ENCODE measurements at regions of chr1 and their contacts with region 1.

Region 1: DNA sequence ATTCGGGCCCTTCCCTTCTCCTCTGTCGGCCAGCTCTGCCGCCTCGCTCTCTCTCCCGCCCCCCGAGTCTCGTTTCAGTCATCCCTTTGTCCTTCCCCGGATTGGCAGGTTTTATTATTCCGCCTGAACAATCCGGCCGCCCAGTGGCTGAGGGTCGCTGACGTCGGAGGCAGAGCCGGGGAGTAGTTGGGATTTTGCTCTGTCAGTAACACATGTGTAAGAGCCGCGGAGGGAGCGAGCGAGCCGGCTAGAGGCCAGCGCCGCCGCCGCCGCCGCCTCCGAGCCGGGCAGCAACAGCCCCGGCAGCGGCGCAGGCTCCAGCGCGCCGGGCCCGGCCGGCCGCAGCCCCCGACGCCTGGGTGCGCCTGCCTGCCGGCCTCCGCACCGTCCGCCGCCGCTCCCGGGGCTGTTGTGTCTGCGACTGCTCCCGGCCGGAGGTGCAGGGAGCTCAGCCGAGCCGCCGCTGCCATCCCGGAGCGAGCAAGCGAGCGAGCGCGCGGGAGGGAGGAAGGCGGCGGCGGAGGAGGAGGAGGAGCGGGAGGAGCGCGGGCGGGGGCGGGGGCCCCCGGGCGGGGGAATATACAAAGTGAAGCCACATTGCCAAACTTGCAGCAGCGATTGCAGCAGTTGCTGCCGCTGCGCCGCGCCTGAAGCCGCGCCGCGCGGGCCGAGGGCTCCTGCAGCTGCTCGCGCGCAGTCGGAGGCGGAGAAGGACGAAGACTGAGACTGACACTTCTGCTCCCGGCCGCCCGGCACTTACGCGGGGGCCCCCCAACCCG is at the start of gene LMO4:
- DNase-seq: peak; percentile 57 to 80 (median 70)
- ATAC-seq: peak; percentile 83
- H3K4me3 ChIP-seq: peak within 1 kb of the TSS; percentile 44
- H3K4me3 Mint-ChIP-seq: peak within 1 kb of the TSS; percentile 85 to 97 (median 94)
- H3K27ac ChIP-seq: peak within 1 kb of the TSS; percentile 69
- H3K27ac Mint-ChIP-seq: peak within 1 kb of the TSS; percentile 70 to 98 (median 91)
- H3K4me1 ChIP-seq: peaks cover 19 to 21% of the 10 kb centered on the region in 2 donors
- H3K4me1 Mint-ChIP-seq: peaks cover 23 to 59% (median 42%) of the 10 kb centered on the region in 7 donors
- H3K27me3 ChIP-seq: peaks cover 0 to 6% of the 10 kb centered on the region in 2 donors
- H3K27me3 Mint-ChIP-seq: peaks cover 4 to 33% (median 16%) of the 10 kb centered on the region in 5 donors
- total RNA-seq, gene LMO4: 6.4 to 30.6 (median 9.4) TPM

Region 2: GRCh38 chr1:86499987-86500593 is 828.4 kb before region 1 on chr1:
- CTCF ChIA-PET with region 1: no interaction called
- POLR2A ChIA-PET with region 1: no interaction called
- intact Hi-C with region 1: loop called in 1 of 2 experiments (anchors 5 kb)
- DNase-seq: peak in 6 of 9 donors; percentile 55 to 76 (median 73)
- ATAC-seq: peak; percentile 92
- H3K4me3 ChIP-seq: no peak overlapping the region
- H3K4me3 Mint-ChIP-seq: no peak overlapping the region
- H3K27ac ChIP-seq: no peak overlapping the region
- H3K27ac Mint-ChIP-seq: no peak overlapping the region
- H3K4me1 ChIP-seq: peaks cover 0 to 8% of the 10 kb centered on the region in 2 donors
- H3K4me1 Mint-ChIP-seq: peaks cover 0 to 18% (median 10%) of the 10 kb centered on the region in 7 donors
- H3K27me3 ChIP-seq: no peaks in the 10 kb centered on the region
- H3K27me3 Mint-ChIP-seq: peaks cover 6 to 46% (median 14%) of the 10 kb centered on the region in 5 donors

Region 3: GRCh38 chr1:87045761-87046304 is 282.6 kb before region 1 on chr1:
- CTCF ChIA-PET with region 1: no interaction called
- POLR2A ChIA-PET with region 1: no interaction called
- intact Hi-C with region 1: loop called (anchors 5 kb)
- DNase-seq: peak; percentile 7 to 91 (median 85)
- ATAC-seq: peak; percentile 82
- H3K4me3 ChIP-seq: no peak overlapping the region
- H3K4me3 Mint-ChIP-seq: peak overlapping the region; percentile 31 to 87 (median 64)
- H3K27ac ChIP-seq: peak overlapping the region; percentile 58
- H3K27ac Mint-ChIP-seq: peak overlapping the region; percentile 52 to 100 (median 94)
- H3K4me1 ChIP-seq: peaks cover 10 to 21% of the 10 kb centered on the region in 2 donors
- H3K4me1 Mint-ChIP-seq: peaks cover 24 to 72% (median 60%) of the 10 kb centered on the region in 7 donors
- H3K27me3 ChIP-seq: no peaks in the 10 kb centered on the region
- H3K27me3 Mint-ChIP-seq: no peaks in the 10 kb centered on the region

Region 4: DNA sequence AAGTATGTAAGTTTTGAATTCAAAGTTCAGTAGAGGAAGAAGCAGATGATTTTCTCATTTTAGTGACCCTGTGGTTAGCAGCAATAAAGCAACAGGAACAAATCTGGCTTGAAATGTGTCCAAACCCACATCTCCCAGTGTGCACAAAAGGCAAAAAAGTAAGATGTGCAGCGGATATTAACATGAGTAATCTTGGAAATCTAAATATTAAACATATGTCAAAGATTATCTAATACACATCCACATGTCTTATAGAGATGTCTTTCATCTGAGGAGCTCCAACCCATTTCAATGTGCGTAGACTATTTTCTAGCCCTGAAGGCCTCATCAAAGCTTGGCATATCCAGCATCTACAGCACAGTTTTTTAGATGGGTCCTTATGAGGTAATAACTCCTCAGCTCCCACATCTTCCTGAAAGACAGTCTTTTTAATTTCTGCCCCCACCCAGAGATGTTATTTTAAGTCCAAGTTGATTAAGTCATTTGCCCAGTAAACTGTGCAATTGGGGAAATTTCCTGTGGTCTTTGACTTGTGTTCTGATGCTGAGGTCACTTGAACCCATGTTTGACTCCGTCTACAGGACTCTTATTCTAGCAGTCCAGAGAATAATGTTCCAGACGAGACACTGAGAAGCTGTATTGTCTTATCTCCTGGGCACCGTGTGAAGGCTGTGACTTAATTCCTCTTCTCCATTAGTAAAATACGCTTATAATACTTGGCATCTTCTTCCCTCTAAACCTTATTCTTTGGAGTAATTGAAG is 74.0 kb after region 1 on chr1:
- CTCF ChIA-PET with region 1: no interaction called
- POLR2A ChIA-PET with region 1: interaction called, 3 read pairs
- intact Hi-C with region 1: loop called (anchors 1 to 5 kb)
- DNase-seq: no peak
- ATAC-seq: no peak
- H3K4me3 ChIP-seq: no peak overlapping the region
- H3K4me3 Mint-ChIP-seq: no peak overlapping the region
- H3K27ac ChIP-seq: no peak overlapping the region
- H3K27ac Mint-ChIP-seq: no peak overlapping the region
- H3K4me1 ChIP-seq: no peaks in the 10 kb centered on the region
- H3K4me1 Mint-ChIP-seq: peaks cover 4 to 26% (median 12%) of the 10 kb centered on the region in 7 donors
- H3K27me3 ChIP-seq: no peaks in the 10 kb centered on the region
- H3K27me3 Mint-ChIP-seq: peaks cover 0 to 46% (median 0%) of the 10 kb centered on the region in 5 donors

Region 5: DNA sequence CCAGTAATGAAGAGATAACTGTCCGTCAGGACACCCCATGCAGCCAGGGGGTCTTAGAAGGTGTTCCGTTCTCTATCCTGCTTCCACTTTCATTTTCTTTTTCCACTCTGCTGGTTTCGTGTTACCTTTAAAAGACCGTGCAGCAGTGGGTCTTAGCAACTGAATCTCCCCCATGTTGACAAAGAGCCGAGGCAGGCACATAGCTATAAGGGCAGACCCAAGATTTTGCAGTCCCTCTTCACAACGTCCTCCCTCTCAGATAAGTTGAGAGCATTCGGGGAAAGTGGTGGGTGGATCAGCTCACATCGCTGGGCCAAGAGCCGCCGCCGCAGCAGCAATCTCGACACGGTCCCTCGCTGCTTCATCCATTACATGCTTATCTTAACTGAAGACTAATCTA is 355.7 kb after region 1 on chr1:
- CTCF ChIA-PET with region 1: no interaction called
- POLR2A ChIA-PET with region 1: no interaction called
- intact Hi-C with region 1: loop called in 1 of 2 experiments (anchors 2 kb)
- DNase-seq: peak in 2 of 9 donors; percentile 5 to 7
- ATAC-seq: no peak
- H3K4me3 ChIP-seq: peak overlapping the region; percentile 6
- H3K4me3 Mint-ChIP-seq: peak overlapping the region in 9 of 10 donors; percentile 65 to 85 (median 74)
- H3K27ac ChIP-seq: no peak overlapping the region
- H3K27ac Mint-ChIP-seq: peak overlapping the region in 7 of 9 donors; percentile 3 to 91 (median 46)
- H3K4me1 ChIP-seq: no peaks in the 10 kb centered on the region
- H3K4me1 Mint-ChIP-seq: no peaks in the 10 kb centered on the region
- H3K27me3 ChIP-seq: no peaks in the 10 kb centered on the region
- H3K27me3 Mint-ChIP-seq: peaks cover 0 to 19% (median 0%) of the 10 kb centered on the region in 5 donors

Region 6: DNA sequence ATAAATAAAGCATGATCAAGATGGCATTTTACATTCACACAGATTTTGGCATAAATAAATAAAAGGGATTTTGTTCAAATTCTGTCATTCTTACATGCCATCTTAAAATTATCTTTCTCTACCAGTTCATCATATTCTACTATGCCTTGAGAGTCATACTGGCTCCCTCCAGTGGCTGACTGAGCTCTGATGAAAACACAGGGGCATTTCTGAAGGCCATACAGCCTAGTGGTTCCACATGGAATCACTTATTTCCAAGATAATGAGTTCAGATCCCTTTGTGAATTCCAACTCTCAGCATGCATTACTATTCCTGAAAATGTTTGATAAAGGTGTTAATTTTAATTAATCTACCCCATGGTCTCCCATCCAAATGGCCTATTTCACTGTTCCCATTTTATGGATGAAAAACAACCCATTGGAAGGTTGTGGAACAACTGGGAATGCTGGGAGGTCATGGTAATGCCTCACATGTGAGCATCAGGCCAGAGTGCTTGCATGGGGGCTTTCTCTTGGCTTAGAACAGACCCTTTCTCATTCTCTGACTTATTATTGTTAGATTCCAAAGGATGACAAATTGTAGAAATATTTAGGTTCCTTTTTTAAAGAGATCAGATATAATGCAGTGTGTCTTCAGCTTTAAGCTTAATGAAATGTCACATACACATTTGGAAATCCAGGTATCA is 733.2 kb after region 1 on chr1:
- CTCF ChIA-PET with region 1: interaction called, 4 read pairs
- POLR2A ChIA-PET with region 1: no interaction called
- intact Hi-C with region 1: loop called in 1 of 2 experiments (anchors 1 kb)
- DNase-seq: no peak
- ATAC-seq: no peak
- H3K4me3 ChIP-seq: no peak overlapping the region
- H3K4me3 Mint-ChIP-seq: no peak overlapping the region
- H3K27ac ChIP-seq: no peak overlapping the region
- H3K27ac Mint-ChIP-seq: no peak overlapping the region
- H3K4me1 ChIP-seq: no peaks in the 10 kb centered on the region
- H3K4me1 Mint-ChIP-seq: no peaks in the 10 kb centered on the region
- H3K27me3 ChIP-seq: no peaks in the 10 kb centered on the region
- H3K27me3 Mint-ChIP-seq: peaks cover 0 to 5% (median 0%) of the 10 kb centered on the region in 5 donors

Region 7: DNA sequence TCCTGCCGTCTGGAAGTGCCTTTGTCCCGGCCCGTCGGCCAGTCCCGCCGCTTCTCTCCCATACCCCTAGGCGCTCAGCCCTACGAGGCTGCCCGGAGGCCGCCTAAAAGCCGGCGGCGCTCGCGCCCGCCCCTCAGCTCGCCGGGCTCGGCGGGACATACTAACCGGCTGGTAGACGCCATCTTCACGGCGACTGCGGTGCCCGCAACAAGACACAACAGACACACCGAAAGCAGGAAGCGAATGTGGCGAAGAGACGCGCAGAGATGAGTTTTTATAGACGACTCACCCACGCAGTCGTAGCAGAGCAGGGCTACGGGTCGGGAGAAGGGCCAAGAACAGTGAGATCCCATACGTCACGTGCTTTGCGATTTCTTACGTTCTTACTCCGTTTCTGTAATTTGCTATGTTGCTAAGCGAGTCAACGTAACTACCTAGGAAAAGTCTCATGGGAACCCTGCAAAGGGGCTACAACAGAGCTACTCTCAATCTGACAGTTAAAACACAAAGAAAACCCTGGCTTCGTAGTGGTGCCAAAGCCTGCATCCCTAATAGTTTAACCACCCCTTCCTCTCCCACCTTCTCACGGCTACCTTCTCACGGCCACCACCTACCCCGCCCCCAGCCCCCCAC is 1563.0 kb after region 1 on chr1 and contains the start of gene GTF2B:
- CTCF ChIA-PET with region 1: no interaction called
- POLR2A ChIA-PET with region 1: no interaction called
- intact Hi-C with region 1: loop called (anchors 2 to 5 kb)
- DNase-seq: peak; percentile 86 to 96 (median 94)
- ATAC-seq: peak; percentile 97
- H3K4me3 ChIP-seq: peak within 1 kb of the TSS; percentile 86
- H3K4me3 Mint-ChIP-seq: peak within 1 kb of the TSS; percentile 87 to 99 (median 95)
- H3K27ac ChIP-seq: peak within 1 kb of the TSS; percentile 91
- H3K27ac Mint-ChIP-seq: peak within 1 kb of the TSS; percentile 93 to 98 (median 97)
- H3K4me1 ChIP-seq: peaks cover 26 to 27% of the 10 kb centered on the region in 2 donors
- H3K4me1 Mint-ChIP-seq: peaks cover 23 to 59% (median 48%) of the 10 kb centered on the region in 7 donors
- H3K27me3 ChIP-seq: no peaks in the 10 kb centered on the region
- H3K27me3 Mint-ChIP-seq: peaks cover 0 to 2% (median 0%) of the 10 kb centered on the region in 5 donors
- total RNA-seq, gene GTF2B: 41.3 to 53.6 (median 47.3) TPM